PC-3 (cell line): ENCODE measurements at regions of chr18 and their contacts with region 1.

Region 1: DNA sequence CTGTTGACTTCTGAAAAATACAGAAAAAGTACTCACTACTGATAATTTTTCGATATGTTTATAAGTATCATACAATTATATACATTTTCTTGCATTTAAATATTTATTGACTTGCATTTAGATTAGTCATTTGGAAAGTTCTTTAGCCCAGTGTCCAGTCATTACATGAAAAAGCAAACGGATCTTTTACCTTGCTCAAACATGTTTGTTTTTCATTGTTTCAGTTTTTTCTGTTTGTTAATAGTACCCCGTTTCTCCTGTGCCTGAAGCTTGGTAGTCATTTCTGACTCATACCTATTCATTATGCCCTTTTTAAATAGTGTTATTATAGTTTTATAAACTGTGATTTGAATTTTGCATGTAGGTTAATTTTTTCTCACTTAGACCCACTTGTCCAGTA is 28.1 kb downstream of the CEP192 start:
- DNase-seq: peak; percentile 83
- ATAC-seq: peak; percentile 98
- H3K4me3 ChIP-seq: peak overlapping the region; percentile 22; the same call in 1 of the 2 replicates
- H3K27ac ChIP-seq: peak overlapping the region; percentile 80
- H3K4me1 ChIP-seq: peaks cover 21% of the 10 kb centered on the region
- H3K27me3 ChIP-seq: no peaks in the 10 kb centered on the region
- CTCF ChIP-seq: no peak

Region 2: GRCh38 chr18:13036622-13037320 is 17.5 kb after region 1 on chr18:
- CTCF ChIA-PET with region 1: no interaction called
- POLR2A ChIA-PET with region 1: interaction called, 12 read pairs
- intact Hi-C with region 1: no loop called
- DNase-seq: peak; percentile 29
- ATAC-seq: peak; percentile 93
- H3K4me3 ChIP-seq: no peak overlapping the region
- H3K27ac ChIP-seq: no peak overlapping the region
- H3K4me1 ChIP-seq: 0 out of 2 replicates have a peak, but pooled peaks cover 4% of the 10 kb centered on the region
- H3K27me3 ChIP-seq: no peaks in the 10 kb centered on the region
- CTCF ChIP-seq: no peak